HCT116 (cell line): ENCODE measurements at regions of chr3 and their contacts with region 1.

Region 1: DNA sequence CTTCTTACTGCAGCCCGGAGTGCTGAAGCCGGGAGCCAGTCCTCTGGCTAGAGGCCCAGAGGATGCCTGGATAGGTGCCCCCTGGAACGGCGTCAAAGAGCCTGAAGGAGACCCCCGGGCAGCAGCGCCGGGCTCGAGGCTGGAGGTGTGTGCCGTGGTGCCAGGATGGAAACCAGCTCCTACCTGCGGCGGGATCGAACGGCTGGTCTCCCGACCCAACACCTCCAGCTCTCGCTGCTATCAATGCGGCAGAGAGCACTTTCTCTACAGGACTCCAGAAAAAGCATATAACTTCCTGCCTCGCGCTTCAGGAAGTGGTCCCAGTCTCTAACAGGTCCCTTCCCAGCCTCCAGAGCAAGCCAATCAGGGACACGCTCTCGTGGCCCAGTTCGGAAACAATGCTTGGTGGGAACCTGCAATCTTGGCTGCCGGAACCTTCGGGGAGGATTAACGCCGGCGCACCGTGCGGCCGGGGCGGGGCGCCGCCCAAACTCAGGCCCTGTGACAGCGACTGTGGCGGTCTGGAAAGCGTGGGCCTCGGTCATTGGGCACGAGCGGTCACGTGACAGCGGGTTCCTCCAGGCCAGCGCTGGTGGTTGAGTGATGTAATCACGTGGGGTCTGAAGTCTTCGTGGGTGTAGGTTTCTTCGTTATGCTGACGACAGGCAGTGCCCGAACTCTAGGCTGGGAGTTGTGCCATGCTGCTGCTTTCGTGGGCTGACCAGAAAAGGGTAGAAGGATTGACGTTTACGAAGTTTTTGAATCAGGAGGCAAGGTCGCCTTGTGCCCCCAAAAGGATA is at the start of gene SLC33A1:
- DNase-seq: peak; percentile 99
- ATAC-seq: peak; percentile 94
- H3K4me3 ChIP-seq: peak within 1 kb of the TSS; percentile 91 to 98
- H3K27ac ChIP-seq: peak within 1 kb of the TSS; percentile 81
- H3K4me1 ChIP-seq: peaks cover 7 to 18% of the 10 kb centered on the region in 2 experiments
- H3K27me3 ChIP-seq: no peaks in the 10 kb centered on the region
- CTCF ChIP-seq: 0 out of 6 replicates have a peak, but pooled peaks of 1 of the 3 experiments have one; percentile 0
- POLR2A ChIP-seq: peak; percentile 83
- RAD21 ChIP-seq: no peak
- total RNA-seq, gene SLC33A1: 23.3 TPM

Region 2: DNA sequence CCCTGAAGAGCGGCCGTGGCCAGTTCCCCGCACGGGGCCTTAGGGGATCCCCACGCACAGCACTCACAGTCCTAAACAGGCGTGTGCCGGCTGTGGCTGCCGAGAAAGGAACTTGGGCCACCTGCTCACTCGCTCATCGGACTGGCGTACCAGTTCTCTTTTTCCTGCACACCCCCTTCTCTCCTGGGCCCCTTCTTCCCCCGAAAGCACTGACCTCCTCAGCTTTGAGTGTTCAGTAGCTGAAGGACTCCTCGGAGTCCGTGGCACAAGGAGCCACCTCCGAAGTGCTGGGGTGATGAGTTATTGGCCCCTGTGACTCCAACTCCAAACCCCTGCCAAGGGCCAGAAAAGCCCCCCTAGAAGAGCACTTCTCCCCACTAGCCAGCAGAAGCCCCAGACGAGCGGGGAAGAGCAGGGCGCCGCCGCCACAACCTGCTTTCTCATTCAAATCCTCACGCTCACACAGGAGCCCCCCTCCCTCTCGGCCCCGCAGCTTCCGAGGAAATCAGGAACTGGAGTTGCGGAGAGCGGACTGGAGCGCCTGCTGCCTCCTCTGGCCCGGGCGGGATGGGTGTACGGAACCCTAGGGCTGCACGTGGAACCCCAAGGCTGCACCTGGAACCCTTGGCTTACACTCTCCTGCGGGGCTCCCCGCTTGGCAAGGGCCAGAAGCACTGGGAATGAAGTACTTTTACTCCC is 109.6 kb before region 1 on chr3 and contains the start of gene PLCH1:
- CTCF ChIA-PET with region 1: no interaction called
- POLR2A ChIA-PET with region 1: no interaction called
- RAD21 ChIA-PET with region 1: no interaction called
- intact Hi-C with region 1: loop called (anchors 5 kb)
- DNase-seq: peak; percentile 62
- ATAC-seq: peak; percentile 78
- H3K4me3 ChIP-seq: peak within 1 kb of the TSS; percentile 79 to 83
- H3K27ac ChIP-seq: peak within 1 kb of the TSS; percentile 48
- H3K4me1 ChIP-seq: peaks cover 15 to 46% of the 10 kb centered on the region in 2 experiments
- H3K27me3 ChIP-seq: no peaks in the 10 kb centered on the region
- CTCF ChIP-seq: no peak
- POLR2A ChIP-seq: no peak
- RAD21 ChIP-seq: no peak
- total RNA-seq, gene PLCH1: 3.8 TPM

Region 3: DNA sequence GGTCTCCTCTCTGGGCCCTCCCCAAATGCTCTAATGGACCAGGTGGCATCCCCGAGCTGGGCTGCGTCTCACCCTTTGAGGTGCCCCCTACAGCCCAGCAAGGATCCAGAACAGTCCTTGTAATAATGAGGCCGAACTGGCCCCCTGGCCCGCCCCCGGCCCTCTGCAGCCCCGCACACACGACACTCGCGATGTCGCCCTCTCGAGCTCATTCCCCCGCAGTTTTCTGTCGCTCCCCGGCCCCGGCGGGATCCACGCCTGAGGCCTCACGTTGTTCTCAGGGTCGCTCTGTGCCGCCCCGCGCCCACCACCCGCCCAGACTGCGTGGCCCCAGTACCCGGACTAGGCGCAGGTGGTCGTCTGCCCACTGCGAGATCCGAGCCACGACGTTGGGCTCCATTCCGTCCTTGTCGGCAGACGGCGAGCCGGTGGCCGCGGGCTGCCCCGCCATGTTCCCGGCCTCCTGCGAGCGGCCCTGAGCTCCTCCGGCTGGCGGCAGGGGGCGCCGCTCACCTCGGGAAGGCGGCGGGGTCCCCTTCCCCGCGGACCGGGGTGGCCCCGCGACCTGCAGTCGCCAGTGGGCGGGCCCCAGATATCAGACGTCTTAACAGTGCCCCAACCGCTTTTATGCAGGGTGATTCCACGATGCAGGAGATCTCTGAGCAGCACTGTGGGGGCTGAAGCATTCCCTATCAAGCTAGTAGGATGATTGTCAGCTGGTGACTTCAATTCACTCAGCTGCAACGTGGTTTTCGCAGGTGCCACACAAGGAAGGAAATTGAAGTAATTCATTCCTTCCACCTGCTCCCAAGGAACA is 48.3 kb before region 1 on chr3 and contains the start of gene C3orf33:
- CTCF ChIA-PET with region 1: interaction called, 7 read pairs
- POLR2A ChIA-PET with region 1: interaction called, 3 read pairs
- RAD21 ChIA-PET with region 1: no interaction called
- intact Hi-C with region 1: loop called (anchors 2 kb)
- DNase-seq: peak; percentile 41
- ATAC-seq: peak; percentile 91
- H3K4me3 ChIP-seq: peak within 1 kb of the TSS; percentile 74 to 95
- H3K27ac ChIP-seq: peak within 1 kb of the TSS; percentile 84
- H3K4me1 ChIP-seq: peaks cover 7 to 14% of the 10 kb centered on the region in 2 experiments; a peak in 3 of 4 replicates
- H3K27me3 ChIP-seq: no peaks in the 10 kb centered on the region
- CTCF ChIP-seq: peak; percentile 57 to 85 (median 78)
- POLR2A ChIP-seq: no peak
- RAD21 ChIP-seq: peak; percentile 76
- total RNA-seq, gene C3orf33: 4.7 TPM

Region 4: DNA sequence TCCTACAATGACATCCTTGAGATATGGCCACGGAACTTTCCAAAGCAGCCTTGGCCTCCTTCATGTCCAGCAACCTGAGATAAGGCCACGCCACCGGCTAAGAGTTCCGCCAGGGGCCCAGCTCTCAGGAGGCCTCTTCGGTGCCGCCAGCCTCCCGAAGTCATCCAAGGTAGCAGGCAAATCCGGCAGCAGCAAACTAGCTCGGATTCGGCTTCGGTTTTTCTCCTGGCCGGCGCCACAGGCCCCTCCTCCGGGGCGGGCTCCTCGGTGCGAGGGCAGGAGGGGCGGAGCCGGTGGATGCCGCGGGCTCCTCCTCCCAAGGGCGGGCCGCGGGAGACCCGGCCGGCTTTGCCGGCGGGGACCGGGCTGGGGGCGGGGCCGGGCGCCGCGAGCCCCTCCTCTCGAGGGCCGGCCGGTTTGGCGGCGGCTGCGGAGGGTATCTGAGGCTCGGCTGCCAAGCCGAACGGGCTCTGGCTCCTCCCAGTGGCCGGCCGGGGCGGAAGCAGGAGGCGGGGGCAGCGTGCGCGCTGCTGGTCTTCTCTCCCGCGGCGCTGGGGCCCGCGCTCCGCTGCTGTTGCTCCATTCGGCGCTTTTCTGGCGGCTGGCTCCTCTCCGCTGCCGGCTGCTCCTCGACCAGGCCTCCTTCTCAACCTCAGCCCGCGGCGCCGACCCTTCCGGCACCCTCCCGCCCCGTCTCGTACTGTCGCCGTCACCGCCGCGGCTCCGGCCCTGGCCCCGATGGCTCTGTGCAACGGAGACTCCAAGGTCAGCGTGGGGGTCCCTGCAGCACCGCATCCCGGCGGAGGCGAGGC is 16.0 kb after region 1 on chr3 and contains the start of gene GMPS:
- CTCF ChIA-PET with region 1: interaction called, 3 read pairs
- POLR2A ChIA-PET with region 1: interaction called, 4 read pairs
- RAD21 ChIA-PET with region 1: no interaction called
- intact Hi-C with region 1: loop called (anchors 1 kb)
- DNase-seq: peak; percentile 76
- ATAC-seq: peak; percentile 89
- H3K4me3 ChIP-seq: peak within 1 kb of the TSS; percentile 87 to 98
- H3K27ac ChIP-seq: peak within 1 kb of the TSS; percentile 90
- H3K4me1 ChIP-seq: peaks cover 0 to 25% of the 10 kb centered on the region in 2 experiments; a peak in 3 of 4 replicates
- H3K27me3 ChIP-seq: no peaks in the 10 kb centered on the region
- CTCF ChIP-seq: peak; percentile 5 to 26 (median 22); a peak in 1 of 6 replicates
- POLR2A ChIP-seq: peak; percentile 37
- RAD21 ChIP-seq: peak; percentile 67
- total RNA-seq, gene GMPS: 119 TPM